ENCODE measurements at regions of chr3 and their contacts with region 1.

Region 1: GRCh38 chr3:8963137-8963869 is at the start of gene RAD18:
- DNase-seq: peak; percentile 91
- H3K4me3 Mint-ChIP-seq: peak within 1 kb of the TSS; percentile 98
- H3K27ac Mint-ChIP-seq: peak within 1 kb of the TSS; percentile 97
- H3K4me1 Mint-ChIP-seq: peaks cover 62% of the 10 kb centered on the region
- H3K27me3 Mint-ChIP-seq: peaks cover 7% of the 10 kb centered on the region
- total RNA-seq, gene RAD18: 52.8 and 54.2 TPM in 2 replicates

Region 2: GRCh38 chr3:9452417-9452816 is 489.1 kb after region 1 on chr3:
- intact Hi-C with region 1: loop called (anchors 2 kb)
- DNase-seq: no peak
- H3K4me3 Mint-ChIP-seq: peak overlapping the region; percentile 69
- H3K27ac Mint-ChIP-seq: peak overlapping the region; percentile 93
- H3K4me1 Mint-ChIP-seq: peaks cover 47% of the 10 kb centered on the region
- H3K27me3 Mint-ChIP-seq: no peaks in the 10 kb centered on the region

Measured in activated T-helper 1 cell treated with anti-CD3 and anti-CD28 coated beads, Interleukin-12 subunit alpha, Interleukin-12 subunit beta, Interleukin-2, Interleukin-4 antibody, amounts not matched to agents 30 ng/mL and 10 ng/mL and 1 ng/mL, durations not matched to agents 14 hours and 24 hours and 36 hours (primary cell).